ENCODE measurements at regions of chr2 and their contacts with region 1.

Region 1: GRCh38 chr2:42859006-42859552 is 66.7 kb upstream of the HAAO start:
- H3K4me3 ChIP-seq: no peak overlapping the region
- H3K27ac ChIP-seq: no peak overlapping the region
- H3K4me1 ChIP-seq: no peaks in the 10 kb centered on the region
- CTCF ChIP-seq: peak; percentile 61

Region 2: DNA sequence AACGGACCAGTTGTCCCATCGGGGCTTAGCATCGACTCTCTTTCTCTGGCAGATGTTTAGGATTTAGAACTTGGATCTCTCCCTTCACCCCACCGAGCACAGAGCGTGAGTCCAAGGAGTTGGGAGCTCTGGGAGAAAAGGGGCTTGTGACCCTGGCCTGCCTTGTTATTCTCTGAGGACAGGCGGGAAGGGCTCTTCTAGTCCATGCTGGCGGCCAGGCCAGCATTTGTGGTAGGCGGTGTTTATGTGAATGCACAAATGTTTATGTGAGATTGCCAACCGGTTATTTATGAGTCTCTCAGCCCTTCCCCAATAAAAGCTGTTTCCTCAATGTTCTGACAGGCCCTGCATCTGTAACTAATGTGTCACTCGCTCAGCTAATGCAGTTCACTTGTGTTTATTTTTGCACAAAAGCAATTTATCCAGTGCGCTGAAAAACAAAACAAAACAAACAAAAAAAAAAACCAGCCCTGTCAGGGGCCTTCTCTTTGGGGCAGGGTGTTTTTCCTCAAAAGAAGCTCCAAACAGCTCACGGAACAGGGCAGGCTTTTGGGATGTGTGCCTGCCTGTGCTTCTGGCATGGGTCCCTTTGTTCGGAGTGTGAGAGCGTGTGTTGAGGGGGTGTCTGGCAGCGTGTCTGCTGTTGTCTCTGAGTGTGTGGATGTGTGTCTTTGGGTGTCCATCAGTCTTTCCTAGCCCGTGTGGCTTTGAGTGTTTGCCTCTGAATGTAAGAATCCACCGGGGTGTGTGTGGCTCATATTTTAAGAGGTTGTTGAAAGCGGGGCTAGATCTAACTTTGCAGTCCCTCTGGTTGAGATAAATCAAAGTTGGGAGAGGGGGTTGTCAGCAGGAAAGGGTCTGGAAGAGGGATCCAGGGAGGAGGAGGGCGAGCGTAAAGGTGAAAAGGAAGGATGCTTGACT is 13.9 kb before region 1 on chr2:
- CTCF ChIA-PET with region 1: interaction called, 24 read pairs
- POLR2A ChIA-PET with region 1: no interaction called
- H3K4me3 ChIP-seq: no peak overlapping the region
- H3K27ac ChIP-seq: no peak overlapping the region
- H3K4me1 ChIP-seq: peaks cover 6% of the 10 kb centered on the region; the same call in 1 of the 2 replicates
- CTCF ChIP-seq: no peak

Region 3: DNA sequence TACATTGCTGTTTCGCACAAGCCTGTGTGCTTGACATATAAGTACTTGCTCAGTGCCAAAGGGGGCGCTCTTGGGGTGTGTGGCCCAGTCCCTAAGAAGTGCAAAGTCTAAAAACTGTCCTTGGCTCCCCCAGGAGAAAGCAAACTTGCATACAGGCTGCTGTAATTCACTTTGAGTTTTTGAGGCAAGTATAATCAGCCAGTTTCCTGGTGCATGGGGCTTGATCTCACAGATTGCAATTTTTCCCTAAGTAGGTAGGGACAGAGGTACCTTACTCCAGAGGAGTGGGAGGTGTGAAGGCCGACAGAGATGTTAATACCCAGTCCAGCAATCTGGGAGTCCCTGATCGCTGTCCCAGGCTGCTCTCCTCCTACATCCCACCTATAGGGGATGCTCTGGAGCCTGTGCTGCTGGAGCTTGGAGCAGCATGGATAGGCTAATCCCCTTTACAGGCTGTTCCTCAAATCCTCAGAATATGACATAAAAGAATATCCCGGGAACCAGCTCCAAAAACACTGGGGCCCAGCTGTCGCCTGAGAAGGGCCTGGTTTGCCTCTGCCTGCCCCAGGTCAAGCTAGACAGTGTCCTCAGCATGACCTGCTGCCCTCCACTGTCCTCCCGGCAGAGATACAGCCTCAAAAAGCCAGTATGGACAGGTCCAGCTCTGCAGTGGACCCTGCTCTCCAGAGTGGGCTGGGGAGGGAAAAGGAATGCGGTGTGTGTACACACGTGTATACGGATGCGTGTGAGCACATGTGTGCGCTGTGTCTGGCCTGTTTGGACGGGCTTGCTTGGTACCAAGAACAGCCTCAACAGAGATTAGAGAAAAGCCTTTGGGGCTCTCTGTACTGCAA is 69.8 kb after region 1 on chr2:
- CTCF ChIA-PET with region 1: interaction called, 14 read pairs
- POLR2A ChIA-PET with region 1: no interaction called
- H3K4me3 ChIP-seq: no peak overlapping the region
- H3K27ac ChIP-seq: no peak overlapping the region; the same call in 1 of the 2 replicates
- H3K4me1 ChIP-seq: peaks cover 6% of the 10 kb centered on the region
- CTCF ChIP-seq: 0 out of 2 replicates have a peak, but pooled peaks have one; percentile 25

Region 4: DNA sequence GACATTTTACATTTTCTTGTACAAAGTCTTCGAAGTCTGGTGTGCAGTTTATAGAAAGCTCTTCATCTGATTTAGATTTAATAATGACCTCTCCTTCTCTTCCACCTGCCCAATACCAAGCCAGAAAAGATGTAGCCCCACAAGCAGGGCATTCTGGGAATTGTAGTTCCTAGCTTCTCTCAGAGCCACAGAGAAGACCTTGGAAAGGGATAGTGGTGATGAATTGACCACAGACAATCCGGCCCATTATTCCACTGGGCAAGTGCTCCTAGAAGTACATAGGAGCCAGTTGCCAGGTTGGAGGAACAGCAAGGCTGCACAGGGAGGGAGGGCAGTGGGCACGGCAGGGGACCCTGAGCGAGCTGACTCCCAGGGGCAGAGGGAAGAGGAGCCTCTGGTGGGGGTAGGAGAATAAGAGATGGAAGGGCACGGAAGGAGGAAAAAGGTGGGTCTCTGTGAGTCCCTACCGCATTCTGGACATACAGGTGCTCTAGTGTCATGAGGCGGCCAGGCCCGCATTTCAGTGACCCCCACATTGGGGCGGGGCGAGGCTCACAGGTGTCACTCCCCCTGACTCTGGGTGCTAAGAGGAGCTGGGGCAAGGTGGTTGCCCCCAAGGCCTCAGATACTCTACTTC is 85.8 kb after region 1 on chr2:
- CTCF ChIA-PET with region 1: interaction called, 21 read pairs
- POLR2A ChIA-PET with region 1: no interaction called
- H3K4me3 ChIP-seq: no peak overlapping the region
- H3K27ac ChIP-seq: no peak overlapping the region
- H3K4me1 ChIP-seq: no peaks in the 10 kb centered on the region
- CTCF ChIP-seq: no peak

Region 5: GRCh38 chr2:43724728-43725526 is 865.8 kb after region 1 on chr2:
- CTCF ChIA-PET with region 1: no interaction called
- POLR2A ChIA-PET with region 1: no interaction called
- H3K4me3 ChIP-seq: no peak overlapping the region
- H3K27ac ChIP-seq: no peak overlapping the region
- H3K4me1 ChIP-seq: no peaks in the 10 kb centered on the region
- CTCF ChIP-seq: no peak